Naive thymus-derived CD4-positive, alpha-beta T cell (primary cell): ENCODE measurements at regions of chr2 and their contacts with region 1.

Region 1: GRCh38 chr2:26033818-26034636 is at the start of gene RAB10:
- DNase-seq: peak; percentile 98 to 100 (median 99)
- ATAC-seq: peak; percentile 95
- H3K4me3 ChIP-seq: peak within 1 kb of the TSS; percentile 96
- H3K4me3 Mint-ChIP-seq: peak within 1 kb of the TSS; percentile 90 to 99 (median 96)
- H3K27ac ChIP-seq: peak within 1 kb of the TSS; percentile 90
- H3K27ac Mint-ChIP-seq: peak within 1 kb of the TSS; percentile 86 to 97 (median 95)
- H3K4me1 ChIP-seq: peaks cover 18 to 24% of the 10 kb centered on the region in 2 donors
- H3K4me1 Mint-ChIP-seq: peaks cover 31 to 48% (median 41%) of the 10 kb centered on the region in 7 donors
- H3K27me3 ChIP-seq: no peaks in the 10 kb centered on the region
- H3K27me3 Mint-ChIP-seq: peaks cover 0 to 2% (median 0%) of the 10 kb centered on the region in 5 donors
- total RNA-seq, gene RAB10: 25.6 to 108 (median 60.5) TPM

Region 2: DNA sequence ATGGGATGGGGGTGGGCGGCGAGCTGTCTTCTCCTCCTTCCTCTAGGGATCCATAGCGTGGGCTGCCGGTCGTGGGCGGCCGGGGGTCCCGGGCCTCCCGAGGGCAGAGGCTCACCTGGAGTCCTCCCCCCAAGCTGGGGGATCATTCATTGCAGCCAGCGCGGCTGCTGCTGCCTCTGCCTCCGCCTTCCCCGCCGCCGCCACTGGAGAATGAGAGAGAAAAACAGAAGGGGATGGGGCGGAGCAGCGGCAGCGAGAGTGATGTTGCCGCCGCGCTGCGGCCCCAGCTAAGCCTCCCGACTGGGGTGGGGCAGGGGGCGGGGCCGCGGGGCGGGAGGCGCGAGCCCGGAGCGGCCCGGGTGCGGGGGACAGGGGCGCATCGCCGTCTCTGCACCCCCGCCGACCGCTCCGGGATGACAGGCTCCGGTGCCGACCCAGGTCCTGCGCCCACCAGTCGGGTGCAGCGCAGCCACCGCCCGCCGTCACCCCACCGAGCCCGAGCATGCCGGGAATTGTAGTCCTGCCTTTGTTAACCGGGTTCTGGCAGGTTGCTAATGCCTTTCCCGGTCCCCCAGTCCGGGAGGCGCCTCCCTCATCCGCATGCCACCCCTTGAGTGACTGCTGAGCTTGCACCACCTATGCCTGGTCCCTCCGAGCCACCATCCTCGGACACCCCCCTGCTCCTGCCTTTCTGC is 51.6 kb before region 1 on chr2 and contains the start of gene KIF3C:
- CTCF ChIA-PET with region 1: no interaction called
- POLR2A ChIA-PET with region 1: interaction called, 6 read pairs
- intact Hi-C with region 1: loop called (anchors 1 kb)
- DNase-seq: peak; percentile 59 to 76 (median 73)
- ATAC-seq: peak; percentile 93
- H3K4me3 ChIP-seq: peak within 1 kb of the TSS; percentile 64
- H3K4me3 Mint-ChIP-seq: peak within 1 kb of the TSS; percentile 83 to 94 (median 87)
- H3K27ac ChIP-seq: peak within 1 kb of the TSS; percentile 62
- H3K27ac Mint-ChIP-seq: peak within 1 kb of the TSS; percentile 28 to 89 (median 81)
- H3K4me1 ChIP-seq: peaks cover 0 to 5% of the 10 kb centered on the region in 2 donors
- H3K4me1 Mint-ChIP-seq: peaks cover 12 to 24% (median 16%) of the 10 kb centered on the region in 7 donors
- H3K27me3 ChIP-seq: no peaks in the 10 kb centered on the region
- H3K27me3 Mint-ChIP-seq: no peaks in the 10 kb centered on the region
- total RNA-seq, gene KIF3C: 2.9 to 6.3 (median 5.7) TPM

Region 3: GRCh38 chr2:26043862-26044696 is 10.1 kb after region 1 on chr2:
- CTCF ChIA-PET with region 1: interaction called, 3 read pairs
- POLR2A ChIA-PET with region 1: interaction called, 3 read pairs
- intact Hi-C with region 1: loop called in 1 of 2 experiments (anchors 1 kb)
- DNase-seq: no peak
- ATAC-seq: peak; percentile 72
- H3K4me3 ChIP-seq: no peak overlapping the region
- H3K4me3 Mint-ChIP-seq: peak overlapping the region in 9 of 10 donors; percentile 0 to 43 (median 23)
- H3K27ac ChIP-seq: no peak overlapping the region
- H3K27ac Mint-ChIP-seq: peak overlapping the region in 6 of 9 donors; percentile 4 to 39 (median 15)
- H3K4me1 ChIP-seq: peaks cover 0 to 17% of the 10 kb centered on the region in 2 donors
- H3K4me1 Mint-ChIP-seq: peaks cover 50 to 78% (median 66%) of the 10 kb centered on the region in 7 donors
- H3K27me3 ChIP-seq: no peaks in the 10 kb centered on the region
- H3K27me3 Mint-ChIP-seq: no peaks in the 10 kb centered on the region

Region 4: GRCh38 chr2:26184555-26185303 is 150.7 kb after region 1 on chr2:
- CTCF ChIA-PET with region 1: interaction called, 4 read pairs
- POLR2A ChIA-PET with region 1: interaction called, 13 read pairs
- intact Hi-C with region 1: loop called in 1 of 2 experiments (anchors 1 kb)
- DNase-seq: peak; percentile 82 to 91 (median 88)
- ATAC-seq: peak; percentile 98
- H3K4me3 ChIP-seq: peak overlapping the region; percentile 68
- H3K4me3 Mint-ChIP-seq: peak overlapping the region; percentile 79 to 91 (median 85)
- H3K27ac ChIP-seq: peak overlapping the region; percentile 71
- H3K27ac Mint-ChIP-seq: peak overlapping the region in 7 of 9 donors; percentile 25 to 90 (median 67)
- H3K4me1 ChIP-seq: peaks cover 5 to 8% of the 10 kb centered on the region in 2 donors
- H3K4me1 Mint-ChIP-seq: peaks cover 6 to 30% (median 23%) of the 10 kb centered on the region in 7 donors
- H3K27me3 ChIP-seq: no peaks in the 10 kb centered on the region
- H3K27me3 Mint-ChIP-seq: peaks cover 11 to 23% (median 15%) of the 10 kb centered on the region in 5 donors

Region 5: GRCh38 chr2:26299471-26300101 is 265.6 kb after region 1 on chr2:
- CTCF ChIA-PET with region 1: no interaction called
- POLR2A ChIA-PET with region 1: no interaction called
- intact Hi-C with region 1: loop called in 1 of 2 experiments (anchors 2 kb)
- DNase-seq: peak in 7 of 9 donors; percentile 39 to 58 (median 51)
- ATAC-seq: peak; percentile 46
- H3K4me3 ChIP-seq: peak overlapping the region; percentile 78
- H3K4me3 Mint-ChIP-seq: no peak overlapping the region
- H3K27ac ChIP-seq: peak overlapping the region; percentile 84
- H3K27ac Mint-ChIP-seq: no peak overlapping the region
- H3K4me1 ChIP-seq: peaks cover 7 to 15% of the 10 kb centered on the region in 2 donors
- H3K4me1 Mint-ChIP-seq: peaks cover 0 to 8% (median 0%) of the 10 kb centered on the region in 7 donors
- H3K27me3 ChIP-seq: no peaks in the 10 kb centered on the region
- H3K27me3 Mint-ChIP-seq: peaks cover 0 to 29% (median 0%) of the 10 kb centered on the region in 5 donors

Region 6: DNA sequence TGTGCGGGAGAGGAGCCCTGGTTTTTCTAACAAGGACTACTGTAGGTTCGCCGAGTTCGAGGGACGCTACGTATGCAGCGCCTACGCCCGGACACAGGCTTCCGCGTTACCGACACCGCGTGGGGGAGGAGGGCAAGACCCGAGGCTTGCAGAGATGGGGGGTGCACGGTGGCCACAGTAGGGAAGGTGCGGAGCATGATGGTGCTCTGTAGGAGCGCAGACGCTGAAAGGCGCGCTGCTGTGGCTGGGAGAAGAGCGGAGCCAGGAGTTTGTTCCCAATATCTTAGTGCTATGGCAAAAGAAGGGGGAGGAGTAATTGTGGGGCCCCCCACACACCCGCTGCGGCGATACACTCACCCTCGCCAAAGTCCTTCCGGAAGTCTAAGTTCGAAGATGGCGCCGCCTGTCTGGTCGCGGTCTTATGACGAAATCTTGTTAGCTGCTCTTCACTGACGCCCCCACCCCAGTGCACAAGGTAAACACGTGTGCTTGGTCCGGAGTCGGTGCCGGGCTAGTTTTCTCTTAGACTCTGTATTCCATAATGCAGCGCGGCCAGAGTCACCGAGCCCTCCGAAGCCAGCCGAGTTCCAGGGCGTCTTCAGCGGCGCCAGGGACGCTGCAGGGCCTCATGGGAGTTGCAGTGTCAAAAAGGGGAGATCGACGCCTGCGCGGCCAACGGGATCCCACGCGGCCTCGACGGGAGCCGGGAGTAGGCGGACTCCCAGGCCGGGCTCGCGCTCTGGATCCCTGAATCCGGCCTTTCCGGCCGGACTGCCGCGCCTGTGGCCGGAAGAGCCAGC is 1322.6 kb after region 1 on chr2 and contains the start of gene GTF3C2:
- CTCF ChIA-PET with region 1: no interaction called
- POLR2A ChIA-PET with region 1: no interaction called
- intact Hi-C with region 1: loop called in 1 of 2 experiments (anchors 5 kb)
- DNase-seq: peak; percentile 76 to 94 (median 92)
- ATAC-seq: peak; percentile 85
- H3K4me3 ChIP-seq: peak within 1 kb of the TSS; percentile 96
- H3K4me3 Mint-ChIP-seq: peak within 1 kb of the TSS; percentile 95 to 100 (median 98)
- H3K27ac ChIP-seq: peak within 1 kb of the TSS; percentile 91
- H3K27ac Mint-ChIP-seq: peak within 1 kb of the TSS; percentile 96 to 100 (median 99)
- H3K4me1 ChIP-seq: peaks cover 24 to 34% of the 10 kb centered on the region in 2 donors
- H3K4me1 Mint-ChIP-seq: peaks cover 38 to 63% (median 56%) of the 10 kb centered on the region in 7 donors
- H3K27me3 ChIP-seq: no peaks in the 10 kb centered on the region
- H3K27me3 Mint-ChIP-seq: no peaks in the 10 kb centered on the region
- total RNA-seq, gene GTF3C2: 68.0 to 106 (median 78.3) TPM